Posterior vena cava (tissue), 2 donors: ENCODE measurements at regions of chr3 and their contacts with region 1.

Region 1: DNA sequence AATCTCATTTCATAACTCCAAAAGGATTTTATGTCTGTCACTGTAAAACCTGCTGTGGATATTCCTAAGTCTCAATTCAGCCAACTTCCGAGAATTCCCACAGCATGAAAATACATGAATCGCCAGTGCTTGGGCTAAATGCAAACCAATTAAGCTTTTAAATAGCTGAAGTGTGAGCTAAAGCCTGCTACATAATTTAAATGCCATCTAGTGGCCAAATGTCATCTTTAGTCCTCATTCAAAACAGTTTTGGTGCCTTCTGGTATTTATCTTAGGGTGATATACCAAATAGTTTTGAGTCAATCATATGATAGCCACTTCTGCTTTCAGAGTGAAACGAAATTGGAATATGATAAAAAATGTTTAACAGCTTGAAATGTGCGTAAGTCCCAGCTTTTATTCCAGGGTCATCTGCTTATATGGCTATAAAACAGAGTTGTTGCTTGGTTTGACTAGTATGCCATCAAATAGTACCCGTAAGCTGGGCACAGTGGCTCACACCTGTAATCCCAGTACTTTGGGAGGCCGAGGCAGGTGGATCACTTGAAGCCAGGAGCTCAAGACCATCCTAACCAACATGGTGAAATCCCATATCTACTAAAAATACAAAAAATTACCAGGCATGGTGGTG is 41.8 kb upstream of the CCNL1 start:
- DNase-seq: no peak

Region 2: GRCh38 chr3:157493627-157494550 is 292.1 kb after region 1 on chr3:
- intact Hi-C with region 1: loop called (anchors 5 to 10 kb)
- DNase-seq: no peak